ENCODE measurements at regions of chr12 and their contacts with region 1.

Region 1: DNA sequence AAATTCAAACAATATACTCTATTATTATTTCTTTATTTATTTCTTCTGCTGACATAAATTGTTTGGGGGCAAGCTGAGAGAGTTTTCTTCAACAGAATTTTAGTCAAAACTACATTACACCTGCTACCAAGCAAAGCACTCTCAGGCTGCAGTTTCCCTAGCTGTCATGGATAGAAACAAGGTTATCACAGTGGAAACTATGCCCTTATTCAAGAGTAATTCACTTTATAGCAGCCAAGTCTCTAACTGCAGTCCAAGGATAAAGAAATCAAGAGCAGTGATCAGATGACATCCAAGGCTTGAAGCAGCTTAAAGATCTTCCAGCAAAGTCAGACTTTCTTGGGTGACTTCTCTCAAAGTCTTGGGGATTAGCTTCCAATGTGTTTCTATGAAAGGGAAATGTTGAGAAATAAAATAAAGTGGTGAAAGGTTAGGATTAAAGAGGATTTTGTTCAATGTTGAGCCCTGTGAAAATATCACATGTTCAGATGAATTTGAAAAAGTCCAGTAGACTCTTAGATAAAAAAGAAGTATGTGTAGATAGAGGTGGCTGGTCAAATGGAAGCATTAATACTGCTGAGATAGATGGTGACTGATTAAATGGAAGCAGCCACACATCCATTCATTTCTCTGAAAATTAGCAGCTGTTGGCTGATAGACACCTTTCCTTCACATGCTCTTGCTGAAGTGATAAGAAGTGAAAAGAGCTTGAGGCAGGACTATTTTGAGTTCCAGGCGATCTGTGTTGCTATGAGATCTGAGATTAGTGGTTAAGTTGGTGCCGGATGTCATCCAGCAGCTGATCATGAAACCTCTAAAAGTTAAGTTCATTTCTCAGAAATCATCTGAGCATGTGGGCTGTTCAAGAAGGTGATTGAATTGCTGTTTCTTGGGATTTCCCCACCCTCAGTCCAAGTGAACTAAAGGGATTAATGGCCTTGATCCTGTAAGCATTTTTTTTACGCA is 257.8 kb upstream of the BTG1 start:
- DNase-seq: no peak
- H3K4me3 ChIP-seq: no peak overlapping the region
- H3K27ac ChIP-seq: no peak overlapping the region
- H3K4me1 ChIP-seq: peaks cover 4% of the 10 kb centered on the region
- H3K27me3 ChIP-seq: no peaks in the 10 kb centered on the region
- CTCF ChIP-seq: no peak
- POLR2A ChIP-seq: no peak

Region 2: DNA sequence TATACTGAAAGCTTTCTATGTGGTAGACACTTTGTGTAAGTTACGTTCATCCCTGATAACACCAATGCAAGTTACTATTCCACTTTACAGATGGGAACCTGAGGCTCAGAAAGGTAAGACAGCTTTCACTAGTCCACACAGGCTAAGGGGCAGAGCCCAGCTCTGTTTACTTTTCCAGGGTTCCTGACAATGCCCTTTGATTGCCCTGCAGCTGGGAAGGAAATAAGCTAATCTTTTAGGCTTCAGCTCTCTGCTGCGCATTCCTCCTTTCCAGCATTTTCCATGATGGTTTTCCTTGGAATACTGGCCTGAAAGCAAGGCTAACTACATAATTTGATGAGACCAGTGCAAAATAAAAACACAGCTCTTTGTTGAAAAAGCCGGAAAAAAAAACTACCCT is 72.1 kb before region 1 on chr12:
- intact Hi-C with region 1: loop called (anchors 2 kb)
- DNase-seq: no peak
- H3K4me3 ChIP-seq: no peak overlapping the region
- H3K27ac ChIP-seq: no peak overlapping the region
- H3K4me1 ChIP-seq: peaks cover 4% of the 10 kb centered on the region
- H3K27me3 ChIP-seq: no peaks in the 10 kb centered on the region
- CTCF ChIP-seq: no peak
- POLR2A ChIP-seq: no peak